ENCODE measurements at regions of chr1 and their contacts with region 1.

Region 1: DNA sequence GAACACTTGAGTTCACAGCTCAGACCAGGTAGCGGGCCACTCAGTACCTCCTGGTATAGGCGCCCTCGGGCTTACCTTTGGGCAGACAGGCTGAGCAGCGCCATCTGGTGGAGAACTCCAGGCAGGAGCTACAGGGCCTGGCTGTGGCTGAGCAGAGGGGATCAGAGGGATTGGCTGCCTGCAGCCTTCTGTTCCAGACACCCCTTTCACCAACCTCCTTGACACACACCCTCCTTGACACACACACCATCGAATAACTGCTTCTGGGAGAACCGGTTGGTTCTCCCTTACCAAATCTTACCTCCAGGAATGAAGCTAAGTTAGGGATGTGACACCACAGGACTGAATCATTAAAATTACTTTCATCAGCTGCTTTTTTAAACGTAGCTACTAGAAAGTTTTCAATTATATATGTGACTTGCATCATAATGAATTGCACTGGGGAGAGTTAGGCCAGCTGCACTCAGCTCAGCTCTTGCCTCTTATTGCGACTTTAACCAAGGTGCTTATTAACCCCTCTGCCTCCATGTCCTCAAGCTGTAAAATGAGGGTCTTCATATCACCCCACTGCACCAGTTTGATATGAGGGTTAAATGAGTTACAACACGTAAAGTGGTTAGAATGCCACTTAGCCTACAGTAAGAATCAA is 6.6 kb downstream of the LIN28A start:
- DNase-seq: peak; percentile 85
- ATAC-seq: peak; percentile 99
- H3K4me3 ChIP-seq: no peak overlapping the region
- H3K4me3 Mint-ChIP-seq: no peak overlapping the region
- H3K27ac ChIP-seq: no peak overlapping the region
- H3K27ac Mint-ChIP-seq: no peak overlapping the region
- H3K4me1 ChIP-seq: no peaks in the 10 kb centered on the region
- H3K4me1 Mint-ChIP-seq: no peaks in the 10 kb centered on the region
- H3K27me3 ChIP-seq: peaks cover 0 to 22% (median 19%) of the 10 kb centered on the region in 4 experiments
- H3K27me3 Mint-ChIP-seq: peaks cover 40% of the 10 kb centered on the region
- CTCF ChIP-seq: peak; percentile 90

Region 2: GRCh38 chr1:26102526-26102925 is 314.7 kb before region 1 on chr1:
- CTCF ChIA-PET with region 1: interaction called, 24 read pairs
- POLR2A ChIA-PET with region 1: no interaction called
- intact Hi-C with region 1: loop called (anchors 1 kb)
- DNase-seq: no peak
- ATAC-seq: no peak
- H3K4me3 ChIP-seq: no peak overlapping the region
- H3K4me3 Mint-ChIP-seq: no peak overlapping the region
- H3K27ac ChIP-seq: no peak overlapping the region
- H3K27ac Mint-ChIP-seq: no peak overlapping the region
- H3K4me1 ChIP-seq: no peaks in the 10 kb centered on the region
- H3K4me1 Mint-ChIP-seq: peaks cover 4% of the 10 kb centered on the region
- H3K27me3 ChIP-seq: no peaks in the 10 kb centered on the region
- H3K27me3 Mint-ChIP-seq: peaks cover 17% of the 10 kb centered on the region
- CTCF ChIP-seq: no peak

Region 3: GRCh38 chr1:26145041-26145959 is 271.9 kb before region 1 on chr1:
- CTCF ChIA-PET with region 1: interaction called, 12 read pairs
- POLR2A ChIA-PET with region 1: no interaction called
- intact Hi-C with region 1: no loop called
- DNase-seq: peak; percentile 79
- ATAC-seq: peak; percentile 65
- H3K4me3 ChIP-seq: no peak overlapping the region
- H3K4me3 Mint-ChIP-seq: no peak overlapping the region
- H3K27ac ChIP-seq: no peak overlapping the region
- H3K27ac Mint-ChIP-seq: no peak overlapping the region
- H3K4me1 ChIP-seq: peaks cover 4 to 6% of the 10 kb centered on the region in 2 donors
- H3K4me1 Mint-ChIP-seq: peaks cover 3% of the 10 kb centered on the region
- H3K27me3 ChIP-seq: peaks cover 0 to 6% (median 0%) of the 10 kb centered on the region in 4 experiments
- H3K27me3 Mint-ChIP-seq: peaks cover 14% of the 10 kb centered on the region
- CTCF ChIP-seq: peak; percentile 90

Region 4: GRCh38 chr1:26279456-26280332 is 137.5 kb before region 1 on chr1 and contains the start of gene SH3BGRL3:
- CTCF ChIA-PET with region 1: interaction called, 35 read pairs
- POLR2A ChIA-PET with region 1: no interaction called
- intact Hi-C with region 1: loop called (anchors 1 kb)
- DNase-seq: peak; percentile 87
- ATAC-seq: peak; percentile 68
- H3K4me3 ChIP-seq: peak within 1 kb of the TSS; percentile 75 to 93 (median 90)
- H3K4me3 Mint-ChIP-seq: peak within 1 kb of the TSS; percentile 92
- H3K27ac ChIP-seq: peak within 1 kb of the TSS; percentile 73 to 81
- H3K27ac Mint-ChIP-seq: peak within 1 kb of the TSS; percentile 91
- H3K4me1 ChIP-seq: peaks cover 55 to 83% of the 10 kb centered on the region in 2 donors
- H3K4me1 Mint-ChIP-seq: peaks cover 74% of the 10 kb centered on the region
- H3K27me3 ChIP-seq: no peaks in the 10 kb centered on the region
- H3K27me3 Mint-ChIP-seq: no peaks in the 10 kb centered on the region
- CTCF ChIP-seq: no peak
- total RNA-seq, gene SH3BGRL3: 230 and 232 TPM in 2 replicates

Region 5: GRCh38 chr1:26363549-26364448 is 53.4 kb before region 1 on chr1:
- CTCF ChIA-PET with region 1: interaction called, 30 read pairs
- POLR2A ChIA-PET with region 1: no interaction called
- intact Hi-C with region 1: no loop called
- DNase-seq: peak; percentile 87
- ATAC-seq: peak; percentile 82
- H3K4me3 ChIP-seq: no peak overlapping the region
- H3K4me3 Mint-ChIP-seq: no peak overlapping the region
- H3K27ac ChIP-seq: no peak overlapping the region
- H3K27ac Mint-ChIP-seq: no peak overlapping the region
- H3K4me1 ChIP-seq: peaks cover 22 to 28% of the 10 kb centered on the region in 2 donors
- H3K4me1 Mint-ChIP-seq: peaks cover 31% of the 10 kb centered on the region
- H3K27me3 ChIP-seq: peaks cover 0 to 36% (median 14%) of the 10 kb centered on the region in 4 experiments
- H3K27me3 Mint-ChIP-seq: peaks cover 28% of the 10 kb centered on the region
- CTCF ChIP-seq: peak; percentile 95

Region 6: DNA sequence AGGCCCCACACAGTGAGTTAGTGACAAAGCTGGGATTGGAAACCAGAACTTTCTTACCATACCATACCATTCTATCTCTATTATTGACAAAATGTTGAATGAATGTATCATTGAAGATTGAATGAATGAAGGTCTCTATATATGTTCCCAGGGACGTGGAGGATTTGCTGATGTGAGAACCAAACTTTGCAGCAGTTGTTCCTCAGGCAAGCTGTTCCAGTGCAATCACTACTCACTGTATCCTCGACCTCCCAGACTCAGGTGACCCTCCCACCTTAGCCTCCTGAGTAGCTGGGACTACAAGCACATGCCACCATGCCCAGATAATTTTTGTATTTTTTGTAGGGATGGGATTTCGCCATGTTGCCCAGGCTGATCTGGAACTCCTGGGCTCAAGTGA is 18.2 kb before region 1 on chr1:
- CTCF ChIA-PET with region 1: interaction called, 35 read pairs
- POLR2A ChIA-PET with region 1: no interaction called
- intact Hi-C with region 1: no loop called
- DNase-seq: no peak
- ATAC-seq: no peak
- H3K4me3 ChIP-seq: no peak overlapping the region
- H3K4me3 Mint-ChIP-seq: no peak overlapping the region
- H3K27ac ChIP-seq: no peak overlapping the region
- H3K27ac Mint-ChIP-seq: no peak overlapping the region
- H3K4me1 ChIP-seq: no peaks in the 10 kb centered on the region
- H3K4me1 Mint-ChIP-seq: no peaks in the 10 kb centered on the region
- H3K27me3 ChIP-seq: no peaks in the 10 kb centered on the region
- H3K27me3 Mint-ChIP-seq: peaks cover 20% of the 10 kb centered on the region
- CTCF ChIP-seq: no peak

Measured in B cell (primary cell).